ENCODE measurements at regions of chr20 and their contacts with region 1.

Region 1: GRCh38 chr20:45095753-45096371 is 5.1 kb downstream of the KCNS1 start:
- DNase-seq: peak in 2 of 6 donors; percentile 21 to 60
- ATAC-seq: peak; percentile 47 to 75 (median 66)
- H3K4me3 ChIP-seq: no peak overlapping the region
- H3K27ac ChIP-seq: no peak overlapping the region
- H3K4me1 ChIP-seq: peaks cover 0 to 4% (median 0%) of the 10 kb centered on the region in 3 donors
- H3K27me3 ChIP-seq: peaks cover 0 to 14% (median 6%) of the 10 kb centered on the region in 4 donors
- CTCF ChIP-seq: peak; percentile 33 to 81 (median 67)

Region 2: DNA sequence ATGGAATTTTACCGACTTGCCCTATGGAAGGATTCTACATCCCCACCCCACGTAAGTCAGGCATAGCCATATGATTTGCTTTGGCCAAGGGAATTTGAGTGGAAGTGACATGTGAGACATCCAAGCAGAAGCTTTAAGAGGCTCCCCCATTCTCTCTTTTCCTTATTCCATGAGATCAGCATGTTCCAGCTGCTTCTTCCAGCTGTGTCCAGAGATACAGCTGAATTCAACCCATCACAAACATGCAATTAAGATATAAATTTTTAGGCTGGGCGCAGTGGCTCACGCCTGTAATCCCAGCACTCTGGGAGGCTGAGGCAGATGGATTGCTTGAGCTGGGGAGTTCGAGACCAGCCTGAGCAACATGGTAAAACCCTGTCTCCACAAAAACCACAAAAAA is 226.4 kb before region 1 on chr20:
- intact Hi-C with region 1: no loop called
- DNase-seq: no peak
- ATAC-seq: no peak
- H3K4me3 ChIP-seq: no peak overlapping the region
- H3K27ac ChIP-seq: no peak overlapping the region
- H3K4me1 ChIP-seq: no peaks in the 10 kb centered on the region
- H3K27me3 ChIP-seq: no peaks in the 10 kb centered on the region
- CTCF ChIP-seq: no peak

Region 3: DNA sequence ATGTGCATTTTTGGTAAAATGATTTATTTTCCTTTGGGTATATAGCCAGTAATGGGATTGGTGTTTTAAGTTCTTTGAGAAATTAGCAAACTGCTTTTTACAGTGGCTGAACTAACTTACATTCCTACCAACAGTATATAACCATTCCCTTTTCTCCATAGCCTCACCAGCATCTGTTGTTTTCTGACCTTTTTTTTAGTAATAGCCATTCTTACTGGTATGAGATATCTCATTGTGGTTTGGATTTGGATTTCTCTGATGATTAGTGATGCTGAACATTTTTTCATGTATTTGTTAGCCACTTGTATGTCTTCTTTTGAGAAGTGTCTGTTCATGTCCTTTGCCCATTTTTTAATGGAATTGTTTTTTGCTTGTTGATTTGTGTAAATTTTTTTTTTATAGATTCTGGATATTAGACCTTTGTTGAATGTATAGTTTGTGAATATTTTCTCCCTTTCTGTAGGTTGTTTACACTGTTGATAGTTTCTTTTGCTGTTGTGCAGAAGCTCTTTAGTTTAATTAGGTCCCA is 87.3 kb before region 1 on chr20:
- intact Hi-C with region 1: loop called in 1 of 3 experiments (anchors 10 kb)
- DNase-seq: no peak
- ATAC-seq: no peak
- H3K4me3 ChIP-seq: no peak overlapping the region
- H3K27ac ChIP-seq: no peak overlapping the region
- H3K4me1 ChIP-seq: no peaks in the 10 kb centered on the region
- H3K27me3 ChIP-seq: no peaks in the 10 kb centered on the region
- CTCF ChIP-seq: no peak

Region 4: GRCh38 chr20:45293041-45294002 is 197.5 kb after region 1 on chr20:
- intact Hi-C with region 1: loop called in 1 of 3 experiments (anchors 5 kb)
- DNase-seq: peak; percentile 77 to 97 (median 88)
- ATAC-seq: peak; percentile 86 to 92 (median 92)
- H3K4me3 ChIP-seq: peak overlapping the region; percentile 28 to 77 (median 54)
- H3K27ac ChIP-seq: peak overlapping the region in 3 of 4 donors; percentile 48 to 69 (median 58)
- H3K4me1 ChIP-seq: peaks cover 0 to 5% (median 0%) of the 10 kb centered on the region in 3 donors
- H3K27me3 ChIP-seq: no peaks in the 10 kb centered on the region
- CTCF ChIP-seq: peak; percentile 92 to 98 (median 96)

Region 5: DNA sequence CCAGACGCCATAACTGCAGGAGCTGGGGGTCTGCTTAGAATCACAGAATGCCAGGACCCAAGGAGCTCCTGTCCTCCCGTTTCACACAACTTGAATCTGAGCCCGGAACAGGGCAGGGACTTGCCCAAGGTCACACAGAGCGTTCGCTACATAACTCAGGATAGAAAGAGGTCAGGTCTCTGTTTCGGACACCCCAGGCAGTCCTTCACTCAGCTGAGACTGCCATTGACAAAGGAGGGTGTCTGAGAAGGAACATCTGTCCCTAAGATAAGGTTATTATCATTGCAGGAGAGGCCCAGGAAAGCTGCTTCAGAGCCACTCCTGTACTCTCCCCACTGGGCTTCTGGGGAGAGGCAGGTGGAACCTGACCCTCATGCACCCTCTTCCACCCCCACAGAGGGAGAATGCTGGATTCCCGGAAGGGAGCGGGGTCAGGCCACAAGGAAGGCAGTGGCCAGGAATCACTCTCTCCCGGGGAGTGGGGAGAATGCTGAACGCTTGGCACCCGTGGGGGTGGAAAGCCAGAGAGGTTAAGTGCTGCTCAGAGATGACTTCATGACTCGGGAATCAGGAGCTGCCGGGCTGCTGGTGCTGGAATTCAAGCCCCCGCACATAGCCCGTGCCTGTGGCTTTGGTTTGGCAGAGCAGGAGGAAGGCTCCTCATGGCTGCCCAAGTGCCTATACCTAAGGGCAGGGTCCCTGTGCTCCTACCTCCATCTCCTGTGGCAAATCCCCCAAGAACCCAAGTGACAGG is 241.7 kb after region 1 on chr20:
- intact Hi-C with region 1: no loop called
- DNase-seq: peak in 5 of 6 donors; percentile 53 to 71 (median 67)
- ATAC-seq: peak; percentile 17 to 34 (median 22)
- H3K4me3 ChIP-seq: peak overlapping the region in 2 of 4 donors; percentile 11 to 13
- H3K27ac ChIP-seq: peak overlapping the region; percentile 87 to 98 (median 94)
- H3K4me1 ChIP-seq: peaks cover 55 to 58% (median 55%) of the 10 kb centered on the region in 3 donors
- H3K27me3 ChIP-seq: no peaks in the 10 kb centered on the region
- CTCF ChIP-seq: no peak